Endothelial cell of umbilical vein (primary cell): ENCODE measurements at regions of chr2 and their contacts with region 1.

Region 1: DNA sequence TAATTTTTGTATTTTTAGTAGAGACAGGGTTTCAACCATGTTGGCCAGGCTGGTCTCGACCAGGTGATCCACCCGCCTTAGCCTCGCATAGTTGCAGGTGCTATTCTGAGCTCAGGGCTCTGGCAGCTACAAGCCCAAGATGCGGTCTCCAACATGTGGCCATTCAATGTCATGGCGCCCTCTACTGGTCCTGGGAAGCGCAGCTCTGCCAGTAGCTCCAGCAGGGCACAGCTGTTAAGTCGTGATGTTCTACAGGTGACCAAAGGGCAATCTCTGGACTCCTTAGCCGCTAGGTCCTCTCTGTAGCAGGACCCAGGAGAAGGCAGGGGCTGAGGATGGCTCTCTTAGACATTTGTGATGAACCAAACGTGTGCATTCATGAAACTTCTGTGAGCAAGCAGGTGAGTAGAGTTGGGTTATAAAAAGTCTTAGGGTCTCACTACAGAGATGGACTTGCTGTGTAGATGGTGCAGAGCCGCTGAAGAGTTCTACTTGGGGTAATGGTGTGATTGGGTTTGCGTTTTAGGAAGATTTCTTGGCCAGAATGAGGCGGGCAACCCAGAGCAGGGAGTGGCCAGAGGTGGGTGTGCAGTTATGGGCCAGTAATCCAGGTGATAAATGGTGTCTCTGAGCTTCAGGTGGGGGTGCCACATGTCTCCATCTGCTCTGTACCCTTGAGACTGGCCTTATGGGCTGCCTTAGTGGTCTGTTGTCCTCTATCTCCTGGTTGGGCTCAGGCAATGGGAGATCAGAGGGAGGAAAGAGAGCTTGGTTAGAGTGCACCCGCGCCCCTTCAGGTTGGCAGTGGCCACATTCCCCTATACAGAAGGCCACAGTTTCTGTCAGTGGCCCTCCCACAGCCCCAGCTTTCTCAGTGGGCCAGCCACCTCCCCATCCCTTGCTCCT is 31.0 kb downstream of the IL37 start:
- DNase-seq: peak; percentile 67
- H3K4me3 ChIP-seq: no peak overlapping the region
- H3K27ac ChIP-seq: no peak overlapping the region
- H3K4me1 ChIP-seq: no peaks in the 10 kb centered on the region
- H3K27me3 ChIP-seq: peaks cover 19 to 21% of the 10 kb centered on the region in 2 experiments
- CTCF ChIP-seq: peak; percentile 83 to 94
- POLR2A ChIP-seq: no peak

Region 2: DNA sequence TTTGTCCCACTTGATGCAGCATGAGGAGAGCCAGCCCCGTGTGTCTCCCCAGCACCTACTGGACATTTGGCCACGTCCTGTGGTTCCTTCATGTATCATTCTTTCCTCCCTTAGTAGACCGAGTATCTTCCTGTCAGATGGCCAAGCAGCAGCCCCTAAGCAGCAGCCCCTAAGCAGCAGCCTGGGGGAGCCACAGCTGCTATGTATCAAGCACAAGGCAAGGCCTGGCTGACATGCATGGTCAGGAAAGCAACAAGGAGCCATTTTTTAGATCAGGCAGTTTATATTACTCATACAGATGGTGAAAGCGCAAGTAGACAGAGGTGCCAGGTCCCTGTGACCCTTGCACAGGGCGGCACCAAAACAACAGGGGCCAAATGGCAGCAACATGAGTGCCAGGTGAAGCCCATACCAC is 335.5 kb before region 1 on chr2:
- CTCF ChIA-PET with region 1: interaction called, 13 read pairs
- POLR2A ChIA-PET with region 1: no interaction called
- dilution Hi-C with region 1: no loop called
- intact Hi-C with region 1: loop called (anchors 2 kb)
- DNase-seq: no peak
- H3K4me3 ChIP-seq: no peak overlapping the region
- H3K27ac ChIP-seq: no peak overlapping the region
- H3K4me1 ChIP-seq: no peaks in the 10 kb centered on the region
- H3K27me3 ChIP-seq: no peaks in the 10 kb centered on the region
- CTCF ChIP-seq: no peak
- POLR2A ChIP-seq: no peak

Region 3: GRCh38 chr2:112726497-112727190 is 215.4 kb before region 1 on chr2:
- CTCF ChIA-PET with region 1: interaction called, 68 read pairs
- POLR2A ChIA-PET with region 1: no interaction called
- dilution Hi-C with region 1: no loop called
- intact Hi-C with region 1: no loop called
- DNase-seq: peak; percentile 86
- H3K4me3 ChIP-seq: no peak overlapping the region
- H3K27ac ChIP-seq: no peak overlapping the region
- H3K4me1 ChIP-seq: peaks cover 3% of the 10 kb centered on the region
- H3K27me3 ChIP-seq: no peaks in the 10 kb centered on the region
- CTCF ChIP-seq: peak; percentile 95 to 97
- POLR2A ChIP-seq: no peak

Region 4: GRCh38 chr2:112749755-112750559 is 192.0 kb before region 1 on chr2:
- CTCF ChIA-PET with region 1: interaction called, 410 read pairs
- POLR2A ChIA-PET with region 1: interaction called, 9 read pairs
- dilution Hi-C with region 1: loop called (anchors 25 kb)
- intact Hi-C with region 1: loop called (anchors 1 kb)
- DNase-seq: peak; percentile 67
- H3K4me3 ChIP-seq: no peak overlapping the region
- H3K27ac ChIP-seq: peak overlapping the region; percentile 28
- H3K4me1 ChIP-seq: no peaks in the 10 kb centered on the region
- H3K27me3 ChIP-seq: no peaks in the 10 kb centered on the region
- CTCF ChIP-seq: peak; percentile 91 to 96
- POLR2A ChIP-seq: no peak

Region 5: GRCh38 chr2:112784199-112785189 is 157.5 kb before region 1 on chr2 and contains the start of gene IL1A:
- CTCF ChIA-PET with region 1: interaction called, 14 read pairs
- POLR2A ChIA-PET with region 1: no interaction called
- dilution Hi-C with region 1: no loop called
- intact Hi-C with region 1: no loop called
- DNase-seq: peak; percentile 73
- H3K4me3 ChIP-seq: peak within 1 kb of the TSS in 1 of 3 experiments; percentile 37
- H3K27ac ChIP-seq: peak within 1 kb of the TSS; percentile 73
- H3K4me1 ChIP-seq: peaks cover 43% of the 10 kb centered on the region
- H3K27me3 ChIP-seq: no peaks in the 10 kb centered on the region
- CTCF ChIP-seq: no peak
- POLR2A ChIP-seq: no peak
- total RNA-seq, gene IL1A: 0.99 and 1.4 TPM in 2 replicates

Region 6: DNA sequence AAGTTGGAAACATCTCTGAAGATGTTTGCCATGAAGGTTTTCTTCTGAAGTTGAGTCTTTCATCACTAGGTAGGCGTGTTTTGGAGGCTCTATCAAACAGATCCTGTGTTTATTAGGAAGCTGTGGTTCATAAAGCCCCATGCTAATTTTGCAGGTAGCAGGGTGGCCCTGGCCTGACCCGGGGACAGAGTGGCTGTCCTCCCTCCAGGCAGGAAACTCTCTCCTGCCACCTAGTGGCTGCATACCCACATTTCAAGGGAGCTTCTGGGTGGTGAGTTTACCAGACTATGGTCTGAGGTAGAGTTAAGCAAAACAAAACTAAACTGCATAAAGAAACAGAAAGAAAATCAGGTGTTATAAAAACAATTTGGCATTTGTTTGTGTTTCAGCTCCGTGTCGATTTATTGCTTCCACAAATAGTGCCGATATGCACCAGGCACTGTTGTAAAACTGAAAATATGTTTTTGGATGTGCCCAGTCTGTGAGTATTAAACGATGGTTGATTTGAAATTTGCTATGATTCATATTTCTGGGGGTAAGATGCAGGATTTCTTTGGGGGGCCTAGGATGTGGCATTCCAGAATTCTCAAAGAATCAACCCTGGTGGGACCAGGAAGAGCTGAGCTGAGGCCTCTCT is 57.0 kb before region 1 on chr2:
- CTCF ChIA-PET with region 1: interaction called, 65 read pairs
- POLR2A ChIA-PET with region 1: no interaction called
- dilution Hi-C with region 1: no loop called
- intact Hi-C with region 1: loop called (anchors 2 kb)
- DNase-seq: peak; percentile 38
- H3K4me3 ChIP-seq: no peak overlapping the region
- H3K27ac ChIP-seq: no peak overlapping the region
- H3K4me1 ChIP-seq: peaks cover 19% of the 10 kb centered on the region
- H3K27me3 ChIP-seq: no peaks in the 10 kb centered on the region
- CTCF ChIP-seq: peak; percentile 59 to 74
- POLR2A ChIP-seq: no peak

Region 7: DNA sequence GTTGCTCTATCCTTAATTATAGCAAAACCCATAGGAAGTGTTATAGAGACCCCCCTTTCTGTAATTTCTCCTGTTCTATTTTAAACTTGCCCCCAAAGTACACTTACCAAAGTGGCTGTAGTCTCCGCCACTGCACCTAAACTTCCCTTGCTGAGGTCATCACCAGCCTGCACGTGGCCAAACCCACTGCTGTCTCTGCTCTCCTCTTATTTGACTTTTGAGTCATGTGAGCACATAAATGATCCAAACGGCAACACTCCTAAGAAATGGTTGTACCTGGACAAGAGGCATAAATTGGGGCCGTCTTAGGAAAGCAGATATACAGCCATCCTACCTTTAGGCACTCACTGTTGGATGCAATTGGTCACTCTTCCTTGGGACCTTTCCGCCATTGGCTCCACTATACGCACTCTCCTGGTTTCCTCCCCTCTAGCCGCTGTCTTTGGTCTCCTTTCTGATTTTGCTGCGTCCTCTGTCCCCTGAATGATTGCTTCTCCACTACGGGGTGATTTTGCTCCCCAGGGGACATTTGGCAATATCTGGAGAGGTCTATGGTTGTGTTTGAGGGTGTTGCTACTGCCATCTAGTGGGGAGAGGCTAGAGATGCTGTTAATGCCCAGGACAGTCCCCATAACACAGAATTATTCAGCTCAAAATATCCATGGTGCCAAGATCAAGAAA is 16.6 kb after region 1 on chr2:
- CTCF ChIA-PET with region 1: interaction called, 29 read pairs
- POLR2A ChIA-PET with region 1: no interaction called
- dilution Hi-C with region 1: no loop called
- intact Hi-C with region 1: no loop called
- DNase-seq: peak; percentile 51
- H3K4me3 ChIP-seq: no peak overlapping the region
- H3K27ac ChIP-seq: no peak overlapping the region
- H3K4me1 ChIP-seq: no peaks in the 10 kb centered on the region
- H3K27me3 ChIP-seq: peaks cover 15 to 20% of the 10 kb centered on the region in 2 experiments
- CTCF ChIP-seq: peak; percentile 84 to 90
- POLR2A ChIP-seq: no peak

Region 8: GRCh38 chr2:113316085-113316484 is 374.1 kb after region 1 on chr2:
- CTCF ChIA-PET with region 1: no interaction called
- POLR2A ChIA-PET with region 1: no interaction called
- dilution Hi-C with region 1: no loop called
- intact Hi-C with region 1: no loop called
- DNase-seq: no peak
- H3K4me3 ChIP-seq: no peak overlapping the region
- H3K27ac ChIP-seq: no peak overlapping the region
- H3K4me1 ChIP-seq: no peaks in the 10 kb centered on the region
- H3K27me3 ChIP-seq: peaks cover 3 to 7% of the 10 kb centered on the region in 2 experiments
- CTCF ChIP-seq: no peak
- POLR2A ChIP-seq: no peak

Region 9: GRCh38 chr2:113812204-113812603 is 870.2 kb after region 1 on chr2:
- CTCF ChIA-PET with region 1: no interaction called
- POLR2A ChIA-PET with region 1: no interaction called
- dilution Hi-C with region 1: no loop called
- intact Hi-C with region 1: no loop called
- DNase-seq: no peak
- H3K4me3 ChIP-seq: no peak overlapping the region
- H3K27ac ChIP-seq: no peak overlapping the region
- H3K4me1 ChIP-seq: no peaks in the 10 kb centered on the region
- H3K27me3 ChIP-seq: peaks cover 0 to 2% of the 10 kb centered on the region in 2 experiments
- CTCF ChIP-seq: no peak
- POLR2A ChIP-seq: no peak